ENCODE measurements at regions of chr3 and their contacts with region 1.

Region 1: DNA sequence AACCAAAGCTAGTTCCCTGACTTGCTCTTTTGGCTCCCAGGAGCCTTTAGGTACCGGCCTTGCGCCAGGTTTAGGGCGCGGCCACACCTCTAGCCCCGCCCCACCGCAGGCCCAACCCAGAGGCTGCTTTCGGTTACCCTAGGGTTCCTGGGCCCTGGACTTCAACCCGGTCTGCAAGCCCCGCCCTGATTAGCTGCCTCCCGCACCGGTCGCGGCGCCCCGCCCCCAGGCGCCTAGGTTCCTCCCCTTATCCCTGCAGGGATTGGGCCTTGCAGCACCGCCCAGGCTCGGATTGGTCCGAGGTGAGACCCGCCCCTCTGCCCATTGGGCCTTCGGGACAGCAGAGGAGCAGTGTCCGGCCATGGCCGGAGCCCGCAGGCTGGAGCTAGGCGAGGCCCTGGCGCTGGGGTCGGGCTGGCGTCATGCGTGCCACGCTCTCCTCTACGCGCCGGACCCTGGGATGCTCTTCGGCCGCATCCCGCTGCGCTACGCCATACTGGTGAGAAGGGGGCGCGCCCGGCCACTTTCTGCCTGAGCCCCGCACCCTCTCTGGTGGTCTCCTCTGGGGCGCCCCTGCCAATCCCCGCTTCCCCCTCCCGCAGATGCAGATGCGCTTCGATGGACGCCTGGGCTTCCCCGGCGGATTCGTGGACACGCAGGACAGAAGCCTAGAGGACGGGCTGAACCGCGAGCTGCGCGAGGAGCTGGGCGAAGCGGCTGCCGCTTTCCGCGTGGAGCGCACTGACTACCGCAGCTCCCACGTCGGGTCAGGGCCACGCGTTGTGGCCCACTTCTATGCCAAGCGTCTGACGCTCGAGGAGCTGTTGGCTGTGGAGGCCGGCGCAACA is at the start of gene NUDT16:
- DNase-seq: peak; percentile 100
- ATAC-seq: peak; percentile 99
- H3K4me3 ChIP-seq: peak within 1 kb of the TSS; percentile 66 to 73
- H3K27ac ChIP-seq: peak within 1 kb of the TSS; percentile 24 to 66
- H3K4me1 ChIP-seq: peaks cover 7 to 8% of the 10 kb centered on the region in 2 donors
- H3K27me3 ChIP-seq: no peaks in the 10 kb centered on the region
- total RNA-seq, gene NUDT16: 20.2 to 23.1 TPM

Region 2: DNA sequence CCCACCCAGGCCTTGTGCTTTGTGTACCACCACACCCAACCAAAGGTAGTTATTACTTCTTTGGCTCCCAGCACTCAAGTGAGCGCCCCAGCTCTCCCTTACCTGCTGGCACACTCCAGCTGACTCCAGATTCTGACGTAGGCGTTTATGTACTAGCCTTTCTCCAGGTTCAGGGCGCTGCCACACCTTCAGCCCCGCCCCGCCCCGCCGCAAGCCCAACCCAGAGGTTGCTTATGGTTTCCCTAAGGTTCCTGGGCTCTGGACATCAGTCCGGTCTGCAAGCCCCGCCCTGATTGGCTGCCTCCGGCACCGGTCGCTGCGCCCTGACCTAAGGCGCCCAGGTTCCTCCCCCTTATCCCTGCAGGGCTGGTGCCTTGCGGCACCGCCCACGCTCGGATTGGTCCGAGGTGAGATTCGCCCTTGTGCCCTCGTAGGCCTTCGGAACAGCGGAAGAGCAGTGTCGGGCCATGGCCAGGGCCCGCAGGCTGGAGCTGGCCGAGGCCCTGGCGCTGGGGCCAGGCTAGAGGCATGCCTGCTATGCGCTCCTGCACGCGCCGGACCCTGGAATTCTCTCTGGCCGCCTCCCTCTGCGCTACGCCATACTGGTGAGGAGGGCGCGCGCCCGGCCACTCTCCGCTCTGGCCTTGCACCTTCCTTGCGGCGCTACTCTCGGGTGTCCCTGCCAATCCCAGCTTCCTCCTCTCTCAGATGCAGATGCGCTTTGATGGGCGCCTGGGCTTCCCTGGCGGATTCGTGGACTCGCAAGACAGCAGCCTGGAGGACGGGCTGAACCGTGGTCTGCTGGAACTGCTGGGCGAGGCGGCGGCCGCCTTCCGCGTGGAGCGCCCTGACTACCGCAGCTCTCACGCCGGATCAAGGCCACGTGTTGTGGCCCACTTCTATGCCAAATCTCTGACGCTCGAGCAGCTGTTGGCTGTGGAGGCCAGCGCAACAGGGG is 19.9 kb before region 1 on chr3:
- intact Hi-C with region 1: loop called in 1 of 2 experiments (anchors 2 kb)
- DNase-seq: peak; percentile 91
- ATAC-seq: peak; percentile 91
- H3K4me3 ChIP-seq: peak overlapping the region in 1 of 2 donors; percentile 56
- H3K27ac ChIP-seq: peak overlapping the region in 1 of 2 donors; percentile 23
- H3K4me1 ChIP-seq: no peaks in the 10 kb centered on the region
- H3K27me3 ChIP-seq: no peaks in the 10 kb centered on the region

Region 3: GRCh38 chr3:131484496-131485111 is 102.9 kb after region 1 on chr3:
- intact Hi-C with region 1: no loop called
- DNase-seq: no peak
- ATAC-seq: no peak
- H3K4me3 ChIP-seq: no peak overlapping the region
- H3K27ac ChIP-seq: no peak overlapping the region
- H3K4me1 ChIP-seq: no peaks in the 10 kb centered on the region
- H3K27me3 ChIP-seq: no peaks in the 10 kb centered on the region

Region 4: GRCh38 chr3:131494706-131495105 is 113.0 kb after region 1 on chr3:
- intact Hi-C with region 1: loop called in 1 of 2 experiments (anchors 10 kb)
- DNase-seq: no peak
- ATAC-seq: no peak
- H3K4me3 ChIP-seq: no peak overlapping the region
- H3K27ac ChIP-seq: no peak overlapping the region
- H3K4me1 ChIP-seq: no peaks in the 10 kb centered on the region
- H3K27me3 ChIP-seq: no peaks in the 10 kb centered on the region

Measured in aorta (tissue), 5 donors.